ENCODE measurements at regions of chr11 and their contacts with region 1.

Region 1: DNA sequence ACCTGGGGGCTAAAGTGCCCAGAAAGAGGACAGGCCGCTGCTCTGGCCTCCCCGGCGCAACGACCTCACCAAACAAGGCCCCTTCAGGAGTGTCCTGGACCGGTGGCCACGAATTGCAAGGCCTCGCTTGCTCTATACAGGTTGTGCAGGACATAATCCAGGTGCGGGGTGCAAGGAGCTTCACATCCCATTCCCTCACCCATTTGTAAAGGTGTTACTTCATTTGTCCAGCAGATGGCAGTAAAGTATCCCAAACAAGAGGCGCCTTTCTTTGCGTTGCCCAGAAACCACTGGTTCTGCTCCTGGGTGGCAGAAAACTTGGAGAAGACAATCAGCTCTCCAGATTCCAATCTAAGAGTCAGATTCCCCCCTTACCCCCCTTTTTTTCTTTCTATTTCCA is 35.9 kb upstream of the PRDM11 start:
- DNase-seq: peak; percentile 58
- ATAC-seq: peak; percentile 47
- H3K4me3 Mint-ChIP-seq: no peak overlapping the region
- H3K27ac Mint-ChIP-seq: no peak overlapping the region
- H3K4me1 Mint-ChIP-seq: no peaks in the 10 kb centered on the region
- H3K27me3 Mint-ChIP-seq: peaks cover 28% of the 10 kb centered on the region

Region 2: GRCh38 chr11:44936525-44936924 is 174.0 kb before region 1 on chr11:
- CTCF ChIA-PET with region 1: interaction called, 364 read pairs
- POLR2A ChIA-PET with region 1: no interaction called
- DNase-seq: peak; percentile 86
- ATAC-seq: peak; percentile 77
- H3K4me3 Mint-ChIP-seq: no peak overlapping the region
- H3K27ac Mint-ChIP-seq: no peak overlapping the region
- H3K4me1 Mint-ChIP-seq: no peaks in the 10 kb centered on the region
- H3K27me3 Mint-ChIP-seq: no peaks in the 10 kb centered on the region

Region 3: GRCh38 chr11:45142241-45143055 is 31.9 kb after region 1 on chr11:
- CTCF ChIA-PET with region 1: interaction called, 16 read pairs
- POLR2A ChIA-PET with region 1: no interaction called
- DNase-seq: peak; percentile 15
- ATAC-seq: no peak
- H3K4me3 Mint-ChIP-seq: no peak overlapping the region
- H3K27ac Mint-ChIP-seq: no peak overlapping the region
- H3K4me1 Mint-ChIP-seq: peaks cover 32% of the 10 kb centered on the region
- H3K27me3 Mint-ChIP-seq: peaks cover 57% of the 10 kb centered on the region

Region 4: DNA sequence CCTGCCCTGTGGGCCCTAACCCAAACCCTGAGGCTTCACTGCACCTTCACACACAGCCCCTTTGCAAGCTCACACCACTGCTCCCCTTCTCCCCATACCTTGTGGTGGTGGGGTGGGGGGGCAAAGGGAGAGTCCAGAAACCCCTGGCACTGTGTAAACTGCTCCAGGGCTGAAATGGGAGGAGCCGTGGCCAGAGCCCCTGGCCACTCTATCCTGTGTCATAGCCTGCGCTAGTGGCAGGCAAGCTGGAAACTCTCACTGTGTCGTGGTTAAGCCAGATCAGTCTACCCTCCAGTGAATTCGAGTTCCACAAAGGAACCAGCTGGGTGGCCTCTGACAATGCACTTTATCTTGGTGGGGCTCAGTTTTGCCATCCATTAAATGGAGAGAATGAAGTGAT is 183.9 kb after region 1 on chr11:
- CTCF ChIA-PET with region 1: interaction called, 19 read pairs
- POLR2A ChIA-PET with region 1: no interaction called
- DNase-seq: no peak
- ATAC-seq: no peak
- H3K4me3 Mint-ChIP-seq: no peak overlapping the region
- H3K27ac Mint-ChIP-seq: no peak overlapping the region
- H3K4me1 Mint-ChIP-seq: no peaks in the 10 kb centered on the region
- H3K27me3 Mint-ChIP-seq: peaks cover 43% of the 10 kb centered on the region

Region 5: GRCh38 chr11:45332276-45332934 is 221.8 kb after region 1 on chr11:
- CTCF ChIA-PET with region 1: interaction called, 25 read pairs
- POLR2A ChIA-PET with region 1: no interaction called
- DNase-seq: peak; percentile 41
- ATAC-seq: no peak
- H3K4me3 Mint-ChIP-seq: no peak overlapping the region
- H3K27ac Mint-ChIP-seq: no peak overlapping the region
- H3K4me1 Mint-ChIP-seq: no peaks in the 10 kb centered on the region
- H3K27me3 Mint-ChIP-seq: peaks cover 4% of the 10 kb centered on the region

Measured in activated CD8-positive, alpha-beta T cell treated with anti-CD3 and anti-CD28 coated beads, Interleukin-2, amount 10 ng/mL, durations not matched to agents 7 days and 5 days (primary cell).